Heart left ventricle (tissue), 16 donors: ENCODE measurements at regions of chr4 and their contacts with region 1.

Region 1: DNA sequence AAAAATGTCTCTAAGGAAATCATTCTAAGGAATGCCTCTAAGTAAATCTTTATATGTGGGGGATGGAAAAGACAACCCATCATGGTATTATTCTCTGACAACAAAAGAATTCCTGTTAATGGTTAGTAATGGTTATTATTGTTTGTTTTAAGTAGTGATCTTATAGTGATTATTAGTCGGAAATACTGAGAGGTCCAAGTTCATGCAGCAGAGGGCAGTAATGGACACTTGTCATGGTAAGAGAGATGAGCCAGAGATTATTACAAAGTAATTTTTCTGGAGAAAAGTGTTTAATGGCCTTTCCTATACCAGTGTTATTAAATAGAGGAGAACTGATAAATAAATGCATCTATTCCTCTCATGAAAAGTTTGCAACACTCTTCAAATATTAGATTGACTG is 8.1 kb upstream of the DKK2 start:
- DNase-seq: no peak
- ATAC-seq: no peak
- H3K4me3 ChIP-seq: no peak overlapping the region
- H3K27ac ChIP-seq: no peak overlapping the region
- H3K4me1 ChIP-seq: no peaks in the 10 kb centered on the region
- H3K27me3 ChIP-seq: peaks cover 0 to 17% (median 0%) of the 10 kb centered on the region in 9 donors
- CTCF ChIP-seq: peak in 2 of 12 donors; percentile 7 to 14
- POLR2A ChIP-seq: no peak

Region 2: DNA sequence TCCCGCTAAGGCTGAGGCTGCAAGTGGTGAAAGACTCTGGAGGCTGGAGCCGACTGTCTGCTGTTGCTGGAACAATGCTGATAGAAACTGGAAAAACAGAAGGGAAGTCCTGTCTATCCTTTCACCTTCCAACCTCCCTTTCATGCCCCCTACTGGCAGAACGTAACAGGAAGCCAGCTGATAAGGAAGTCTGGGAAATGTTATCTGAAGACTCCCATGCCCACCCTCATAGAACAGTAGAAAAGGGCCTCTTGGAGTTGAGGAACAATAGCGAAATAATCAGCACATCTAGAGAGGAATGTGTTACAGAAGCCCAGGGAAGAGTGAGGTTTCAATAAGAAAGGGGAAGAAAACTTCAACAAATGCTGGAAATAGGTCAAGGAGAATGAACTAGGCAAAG is 109.1 kb after region 1 on chr4:
- intact Hi-C with region 1: no loop called
- DNase-seq: no peak
- ATAC-seq: no peak
- H3K4me3 ChIP-seq: no peak overlapping the region
- H3K27ac ChIP-seq: no peak overlapping the region
- H3K4me1 ChIP-seq: no peaks in the 10 kb centered on the region
- H3K27me3 ChIP-seq: peaks cover 0 to 4% (median 0%) of the 10 kb centered on the region in 9 donors
- CTCF ChIP-seq: peak in 2 of 12 donors; percentile 11 to 23
- POLR2A ChIP-seq: no peak

Region 3: DNA sequence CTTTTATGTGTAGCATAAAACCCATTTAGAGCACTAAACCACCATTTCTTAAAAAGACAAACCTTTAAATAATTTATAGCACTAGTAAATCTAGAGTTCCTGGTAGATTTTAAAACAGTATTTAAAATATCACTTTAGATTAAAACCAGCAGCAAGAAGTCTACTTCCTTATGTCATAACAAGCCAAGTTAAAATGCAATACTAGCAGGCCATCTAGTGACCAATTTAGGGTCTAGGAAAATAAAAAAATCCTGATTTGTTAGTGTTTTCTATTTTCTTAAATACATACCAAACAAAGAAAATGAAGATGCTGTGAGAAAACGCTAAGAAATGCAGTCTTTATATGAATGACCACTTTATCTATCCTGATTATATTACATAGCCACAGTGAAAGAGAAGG is 622.0 kb after region 1 on chr4:
- intact Hi-C with region 1: loop called in 2 of 10 experiments (anchors 10 kb)
- DNase-seq: no peak
- ATAC-seq: no peak
- H3K4me3 ChIP-seq: no peak overlapping the region
- H3K27ac ChIP-seq: no peak overlapping the region
- H3K4me1 ChIP-seq: peaks cover 0 to 14% (median 1%) of the 10 kb centered on the region in 12 donors
- H3K27me3 ChIP-seq: no peaks in the 10 kb centered on the region
- CTCF ChIP-seq: peak in 9 of 12 donors; percentile 13 to 56 (median 39)
- POLR2A ChIP-seq: no peak